Natural killer cell (primary cell): ENCODE measurements at regions of chr6 and their contacts with region 1.

Region 1: GRCh38 chr6:44096612-44097011 is 30.6 kb downstream of the MRPL14 start:
- DNase-seq: peak; percentile 65 to 89
- ATAC-seq: peak; percentile 90 to 99 (median 96)
- H3K4me3 ChIP-seq: no peak overlapping the region
- H3K4me3 Mint-ChIP-seq: no peak overlapping the region
- H3K27ac ChIP-seq: no peak overlapping the region
- H3K27ac Mint-ChIP-seq: peak overlapping the region in 1 of 2 donors; percentile 47
- H3K4me1 ChIP-seq: peaks cover 3% of the 10 kb centered on the region
- H3K4me1 Mint-ChIP-seq: peaks cover 11 to 15% of the 10 kb centered on the region in 2 donors
- H3K27me3 ChIP-seq: no peaks in the 10 kb centered on the region
- H3K27me3 Mint-ChIP-seq: no peaks in the 10 kb centered on the region
- CTCF ChIP-seq: peak; percentile 80

Region 2: DNA sequence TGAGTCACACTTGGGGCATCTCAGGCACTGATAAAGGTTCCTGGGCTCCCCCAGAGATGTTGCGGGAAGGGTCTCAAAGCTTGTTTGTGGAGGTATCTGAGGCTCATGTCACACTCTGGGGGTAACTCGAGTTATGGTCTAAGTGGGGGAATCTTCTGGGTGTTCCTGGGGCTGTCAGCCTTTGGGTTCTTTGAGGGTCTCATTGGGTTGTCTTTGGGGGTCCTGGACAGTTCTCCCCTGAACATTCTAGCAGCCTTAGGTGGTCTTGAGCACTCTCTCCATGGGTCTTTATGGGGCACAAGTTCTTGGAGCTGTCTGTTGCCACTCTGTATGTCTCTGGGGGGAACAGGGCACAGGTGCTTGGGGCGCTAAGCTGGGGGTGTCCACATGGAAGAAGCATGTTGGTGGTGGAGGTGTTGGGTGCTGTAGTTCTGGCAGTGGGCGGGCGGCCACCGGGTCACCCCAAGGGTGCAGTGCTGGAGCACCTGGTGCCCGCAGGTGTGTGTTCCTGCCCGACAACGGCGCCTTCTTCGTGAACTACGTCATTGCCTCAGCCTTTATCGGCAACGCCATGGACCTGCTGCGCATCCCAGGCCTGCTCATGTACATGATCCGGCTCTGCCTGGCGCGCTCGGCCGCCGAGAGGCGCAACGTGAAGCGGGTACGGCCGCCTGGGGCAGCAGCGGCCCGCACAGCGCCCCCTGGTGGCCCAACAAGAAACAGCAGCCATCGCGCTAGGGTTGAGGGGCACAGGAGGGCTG is 54.9 kb after region 1 on chr6:
- intact Hi-C with region 1: loop called (anchors 1 kb)
- DNase-seq: peak; percentile 80 to 86
- ATAC-seq: peak; percentile 87 to 93 (median 90)
- H3K4me3 ChIP-seq: no peak overlapping the region
- H3K4me3 Mint-ChIP-seq: peak overlapping the region; percentile 40
- H3K27ac ChIP-seq: no peak overlapping the region
- H3K27ac Mint-ChIP-seq: peak overlapping the region; percentile 51 to 72
- H3K4me1 ChIP-seq: peaks cover 7% of the 10 kb centered on the region
- H3K4me1 Mint-ChIP-seq: peaks cover 0 to 18% of the 10 kb centered on the region in 2 donors
- H3K27me3 ChIP-seq: no peaks in the 10 kb centered on the region
- H3K27me3 Mint-ChIP-seq: no peaks in the 10 kb centered on the region
- CTCF ChIP-seq: peak; percentile 98

Region 3: GRCh38 chr6:44237813-44238433 is 141.3 kb after region 1 on chr6:
- intact Hi-C with region 1: loop called (anchors 1 kb)
- DNase-seq: peak; percentile 84 to 89
- ATAC-seq: peak; percentile 79 to 95 (median 90)
- H3K4me3 ChIP-seq: peak overlapping the region; percentile 85
- H3K4me3 Mint-ChIP-seq: peak overlapping the region; percentile 87
- H3K27ac ChIP-seq: peak overlapping the region; percentile 98
- H3K27ac Mint-ChIP-seq: peak overlapping the region; percentile 88 to 98
- H3K4me1 ChIP-seq: peaks cover 20% of the 10 kb centered on the region
- H3K4me1 Mint-ChIP-seq: peaks cover 8 to 16% of the 10 kb centered on the region in 2 donors
- H3K27me3 ChIP-seq: no peaks in the 10 kb centered on the region
- H3K27me3 Mint-ChIP-seq: no peaks in the 10 kb centered on the region
- CTCF ChIP-seq: peak; percentile 98

Region 4: DNA sequence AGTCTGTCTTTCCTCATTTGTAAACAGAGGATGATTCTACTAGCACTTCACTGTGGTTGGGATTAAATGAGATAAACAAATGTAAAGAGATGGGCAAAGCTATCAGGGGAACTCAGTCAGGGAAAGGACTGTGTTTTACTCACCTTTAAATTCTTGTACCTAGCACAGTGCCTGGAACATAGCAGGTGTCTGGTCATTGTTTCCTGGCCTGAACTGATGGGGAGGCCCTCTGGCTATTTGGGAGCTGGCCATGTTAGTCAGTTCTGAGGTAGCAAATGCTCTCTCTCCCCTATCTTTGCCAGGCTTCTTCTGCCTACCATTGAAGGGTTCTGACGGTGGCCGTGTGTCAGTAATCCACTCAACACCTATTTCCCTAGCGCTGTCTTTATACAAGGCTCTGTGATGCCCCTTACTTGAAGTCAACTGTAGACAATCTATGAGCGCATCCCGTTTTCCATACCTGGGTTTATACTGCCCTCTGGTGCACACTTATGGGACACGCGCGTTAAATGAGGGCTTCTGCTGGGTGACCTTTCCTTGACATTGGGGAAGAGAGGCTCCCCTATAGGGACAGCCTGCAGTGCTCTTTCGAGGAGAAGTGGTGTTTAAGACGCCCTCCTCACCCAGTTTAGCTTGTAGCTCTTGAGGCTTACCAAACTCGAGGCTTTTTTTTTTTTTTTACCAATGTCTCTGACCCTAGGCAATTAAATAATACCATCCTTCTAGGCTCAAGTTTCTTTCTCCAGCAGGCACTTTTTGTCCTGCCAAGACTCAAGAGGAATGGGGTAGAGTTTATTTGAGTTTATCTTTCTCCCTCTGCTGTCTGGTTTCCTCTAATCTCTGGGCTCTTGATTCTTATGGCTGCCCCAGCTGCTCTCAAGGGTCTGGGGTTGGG is 241.9 kb after region 1 on chr6:
- intact Hi-C with region 1: loop called (anchors 1 kb)
- DNase-seq: peak; percentile 37 to 84
- ATAC-seq: peak; percentile 77 to 91 (median 91)
- H3K4me3 ChIP-seq: no peak overlapping the region
- H3K4me3 Mint-ChIP-seq: no peak overlapping the region
- H3K27ac ChIP-seq: no peak overlapping the region
- H3K27ac Mint-ChIP-seq: no peak overlapping the region
- H3K4me1 ChIP-seq: no peaks in the 10 kb centered on the region
- H3K4me1 Mint-ChIP-seq: no peaks in the 10 kb centered on the region
- H3K27me3 ChIP-seq: peaks cover 5% of the 10 kb centered on the region
- H3K27me3 Mint-ChIP-seq: peaks cover 21 to 25% of the 10 kb centered on the region in 2 donors
- CTCF ChIP-seq: peak; percentile 61

Region 5: DNA sequence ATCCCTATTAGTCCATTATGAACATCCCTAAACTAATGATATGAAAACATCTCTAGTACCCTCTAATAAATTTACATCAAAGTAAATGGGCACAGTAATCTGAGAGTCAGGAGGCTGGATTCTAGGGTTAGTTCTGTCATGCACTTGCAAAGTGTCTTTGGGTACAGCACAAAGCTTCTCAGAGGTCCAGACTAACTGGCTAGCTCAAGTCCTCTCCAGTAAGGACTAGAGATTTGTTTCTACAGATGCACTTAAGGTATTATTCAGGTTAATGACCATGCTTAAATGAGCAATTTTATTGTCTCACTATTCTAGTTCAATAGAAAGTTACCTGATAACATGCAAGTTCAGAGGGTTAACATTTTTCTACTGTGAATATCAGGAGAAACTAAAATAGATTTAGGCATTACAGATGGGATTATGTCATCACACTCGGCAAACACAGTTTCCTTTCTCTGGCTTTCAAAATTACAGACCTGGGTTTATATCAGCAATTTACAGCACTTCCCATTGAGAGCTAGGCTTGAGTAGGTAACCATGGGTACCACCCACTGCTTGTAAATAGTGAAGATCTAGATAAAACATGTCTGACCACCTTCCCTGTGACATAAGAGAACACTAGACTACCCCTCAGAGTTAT is 828.6 kb after region 1 on chr6:
- intact Hi-C with region 1: no loop called
- DNase-seq: peak in 1 of 2 donors; percentile 88
- ATAC-seq: peak; percentile 81 to 92 (median 90)
- H3K4me3 ChIP-seq: no peak overlapping the region
- H3K4me3 Mint-ChIP-seq: no peak overlapping the region
- H3K27ac ChIP-seq: peak overlapping the region; percentile 61
- H3K27ac Mint-ChIP-seq: peak overlapping the region; percentile 70 to 81
- H3K4me1 ChIP-seq: no peaks in the 10 kb centered on the region
- H3K4me1 Mint-ChIP-seq: peaks cover 13 to 19% of the 10 kb centered on the region in 2 donors
- H3K27me3 ChIP-seq: no peaks in the 10 kb centered on the region
- H3K27me3 Mint-ChIP-seq: no peaks in the 10 kb centered on the region
- CTCF ChIP-seq: no peak